Pancreas (tissue), 10 donors: ENCODE measurements at regions of chr3 and their contacts with region 1.

Region 1: GRCh38 chr3:113287803-113288648 is 76.7 kb downstream of the BOC start:
- DNase-seq: peak in 2 of 6 donors; percentile 37 to 64
- ATAC-seq: peak; percentile 71 to 89 (median 84)
- H3K4me3 ChIP-seq: no peak overlapping the region
- H3K27ac ChIP-seq: no peak overlapping the region
- H3K4me1 ChIP-seq: peaks cover 0 to 7% (median 0%) of the 10 kb centered on the region in 3 donors
- H3K27me3 ChIP-seq: no peaks in the 10 kb centered on the region
- CTCF ChIP-seq: peak; percentile 77 to 96 (median 92)

Region 2: GRCh38 chr3:113051302-113051711 is 236.7 kb before region 1 on chr3:
- intact Hi-C with region 1: loop called in 2 of 3 experiments (anchors 5 kb)
- DNase-seq: peak; percentile 53 to 85 (median 68)
- ATAC-seq: peak; percentile 90 to 100 (median 98)
- H3K4me3 ChIP-seq: no peak overlapping the region
- H3K27ac ChIP-seq: no peak overlapping the region
- H3K4me1 ChIP-seq: no peaks in the 10 kb centered on the region
- H3K27me3 ChIP-seq: no peaks in the 10 kb centered on the region
- CTCF ChIP-seq: peak; percentile 89 to 95 (median 93)

Region 3: DNA sequence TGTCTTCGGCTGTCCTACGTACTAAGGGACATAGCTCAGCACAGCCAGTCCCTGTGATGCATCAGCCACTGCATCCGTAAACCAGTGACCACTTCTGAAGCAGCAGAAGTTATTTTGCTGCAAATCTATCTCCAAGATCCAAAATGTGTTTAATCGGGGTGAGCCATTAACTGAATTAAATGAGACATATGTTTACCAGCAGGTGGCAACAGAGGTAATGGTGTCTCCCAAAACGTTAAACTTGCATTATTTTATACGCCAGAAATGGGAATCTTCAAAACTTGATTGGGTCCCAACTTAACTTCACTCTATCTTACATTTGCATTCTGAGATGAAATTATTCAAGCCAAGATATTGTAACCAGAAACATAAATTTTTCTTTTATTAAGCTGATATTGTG is 152.0 kb before region 1 on chr3:
- intact Hi-C with region 1: loop called (anchors 5 to 10 kb)
- DNase-seq: no peak
- ATAC-seq: peak in 3 of 4 donors; percentile 43 to 60 (median 56)
- H3K4me3 ChIP-seq: no peak overlapping the region
- H3K27ac ChIP-seq: no peak overlapping the region
- H3K4me1 ChIP-seq: no peaks in the 10 kb centered on the region
- H3K27me3 ChIP-seq: no peaks in the 10 kb centered on the region
- CTCF ChIP-seq: peak in 3 of 4 donors; percentile 27 to 50 (median 42)